ENCODE measurements at regions of chr9 and their contacts with region 1.

Region 1: DNA sequence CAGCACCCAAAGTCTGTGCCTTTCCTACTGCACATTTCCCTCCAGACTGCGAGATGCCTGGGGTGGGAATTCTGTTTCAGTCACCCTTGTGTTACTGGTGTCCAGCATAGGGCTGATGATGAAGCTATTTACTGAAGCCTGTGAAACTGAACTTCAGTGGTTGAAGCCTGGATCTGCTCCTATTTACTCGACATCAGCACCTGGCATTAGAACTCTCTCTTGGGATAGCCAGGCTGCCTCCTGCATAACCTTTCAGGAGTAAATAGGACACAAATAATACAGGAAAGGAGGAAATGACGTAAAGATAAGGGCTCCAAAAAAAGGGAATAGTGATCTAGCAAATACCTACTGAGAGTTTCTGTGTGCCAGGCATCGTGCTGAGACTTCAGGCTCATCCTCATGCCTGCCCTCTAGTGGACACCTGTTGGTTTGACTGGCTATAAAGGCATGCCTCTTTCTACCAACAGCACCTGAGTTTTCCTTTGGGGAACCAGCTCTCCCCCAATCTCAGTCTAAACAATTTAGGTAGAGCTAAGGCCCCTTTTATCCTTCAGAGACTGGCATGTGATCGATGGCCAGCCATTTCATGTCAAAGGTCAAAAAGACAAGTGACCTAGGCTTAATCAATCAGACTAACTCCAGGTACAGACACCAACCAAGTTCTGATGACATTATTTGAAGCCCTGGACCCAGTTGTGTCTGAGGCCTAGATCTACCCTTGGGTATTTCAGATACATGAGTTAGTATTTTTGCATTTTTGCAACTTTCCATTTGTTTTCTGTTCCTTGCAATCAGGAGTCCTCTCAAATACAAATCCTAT is 192.1 kb upstream of the TRIM32 start:
- DNase-seq: peak in 1 of 5 donors; percentile 27
- ATAC-seq: peak in 2 of 4 donors; percentile 27 to 45
- H3K4me3 ChIP-seq: no peak overlapping the region
- H3K27ac ChIP-seq: no peak overlapping the region
- H3K4me1 ChIP-seq: no peaks in the 10 kb centered on the region
- H3K27me3 ChIP-seq: no peaks in the 10 kb centered on the region
- CTCF ChIP-seq: peak; percentile 46 to 73 (median 61)
- POLR2A ChIP-seq: no peak

Region 2: GRCh38 chr9:116156621-116157314 is 338.3 kb before region 1 on chr9:
- intact Hi-C with region 1: loop called (anchors 5 to 10 kb)
- DNase-seq: peak; percentile 80 to 90 (median 81)
- ATAC-seq: peak; percentile 92 to 97 (median 94)
- H3K4me3 ChIP-seq: peak overlapping the region in 10 of 12 donors; percentile 11 to 75 (median 50)
- H3K27ac ChIP-seq: peak overlapping the region; percentile 65 to 97 (median 84)
- H3K4me1 ChIP-seq: peaks cover 0 to 36% (median 6%) of the 10 kb centered on the region in 12 donors
- H3K27me3 ChIP-seq: peaks cover 0 to 46% (median 4%) of the 10 kb centered on the region in 9 donors
- CTCF ChIP-seq: peak in 1 of 12 donors; percentile 1
- POLR2A ChIP-seq: peak in 1 of 2 donors; percentile 39

Region 3: DNA sequence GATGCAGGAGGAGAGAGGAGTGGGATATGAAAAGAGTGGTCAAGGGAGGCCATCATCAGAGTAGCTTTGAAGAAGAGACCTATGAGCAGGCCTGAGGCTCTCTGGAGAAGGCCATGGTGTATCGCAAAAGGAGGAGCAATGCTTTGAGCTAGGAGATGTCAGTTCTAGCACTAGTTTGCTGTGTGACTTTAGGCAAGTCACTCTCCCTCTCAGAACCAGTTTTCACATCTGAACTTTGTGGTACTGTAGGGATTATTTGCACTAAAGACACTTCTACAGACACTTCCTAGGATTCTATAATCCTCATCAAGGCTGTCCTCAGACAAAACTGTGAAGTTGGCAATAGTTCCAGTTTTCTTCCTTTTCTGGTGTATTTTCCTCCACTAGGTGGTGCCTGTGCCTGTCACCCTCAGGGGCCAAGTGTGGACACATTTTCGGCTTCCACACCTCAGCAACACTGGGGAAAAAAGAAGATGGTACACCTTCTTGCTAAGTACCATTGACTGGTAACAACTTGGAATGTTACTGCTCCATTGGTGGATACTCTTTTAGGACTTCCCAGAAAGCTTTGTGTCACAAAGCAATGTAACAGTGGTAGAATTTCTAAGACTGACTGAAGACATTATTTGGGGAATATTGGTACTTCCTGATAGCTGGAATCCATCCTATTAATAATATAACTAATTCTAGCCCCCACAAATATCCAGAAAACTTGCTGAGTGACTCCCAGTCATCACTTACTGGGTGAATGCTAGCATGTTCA is 331.6 kb before region 1 on chr9:
- intact Hi-C with region 1: loop called in 9 of 10 experiments (anchors 5 to 10 kb)
- DNase-seq: no peak
- ATAC-seq: peak in 1 of 4 donors; percentile 41
- H3K4me3 ChIP-seq: no peak overlapping the region
- H3K27ac ChIP-seq: no peak overlapping the region
- H3K4me1 ChIP-seq: peaks cover 0 to 15% (median 0%) of the 10 kb centered on the region in 12 donors
- H3K27me3 ChIP-seq: no peaks in the 10 kb centered on the region
- CTCF ChIP-seq: peak; percentile 17 to 56 (median 34)
- POLR2A ChIP-seq: no peak

Region 4: GRCh38 chr9:116365056-116365471 is 130.0 kb before region 1 on chr9:
- intact Hi-C with region 1: loop called in 1 of 10 experiments (anchors 5 kb)
- DNase-seq: peak; percentile 65 to 74 (median 68)
- ATAC-seq: peak; percentile 87 to 97 (median 96)
- H3K4me3 ChIP-seq: peak overlapping the region in 5 of 12 donors; percentile 18 to 34 (median 25)
- H3K27ac ChIP-seq: peak overlapping the region in 8 of 12 donors; percentile 39 to 76 (median 61)
- H3K4me1 ChIP-seq: peaks cover 0 to 25% (median 7%) of the 10 kb centered on the region in 12 donors
- H3K27me3 ChIP-seq: no peaks in the 10 kb centered on the region
- CTCF ChIP-seq: peak in 1 of 12 donors; percentile 30
- POLR2A ChIP-seq: no peak

Region 5: DNA sequence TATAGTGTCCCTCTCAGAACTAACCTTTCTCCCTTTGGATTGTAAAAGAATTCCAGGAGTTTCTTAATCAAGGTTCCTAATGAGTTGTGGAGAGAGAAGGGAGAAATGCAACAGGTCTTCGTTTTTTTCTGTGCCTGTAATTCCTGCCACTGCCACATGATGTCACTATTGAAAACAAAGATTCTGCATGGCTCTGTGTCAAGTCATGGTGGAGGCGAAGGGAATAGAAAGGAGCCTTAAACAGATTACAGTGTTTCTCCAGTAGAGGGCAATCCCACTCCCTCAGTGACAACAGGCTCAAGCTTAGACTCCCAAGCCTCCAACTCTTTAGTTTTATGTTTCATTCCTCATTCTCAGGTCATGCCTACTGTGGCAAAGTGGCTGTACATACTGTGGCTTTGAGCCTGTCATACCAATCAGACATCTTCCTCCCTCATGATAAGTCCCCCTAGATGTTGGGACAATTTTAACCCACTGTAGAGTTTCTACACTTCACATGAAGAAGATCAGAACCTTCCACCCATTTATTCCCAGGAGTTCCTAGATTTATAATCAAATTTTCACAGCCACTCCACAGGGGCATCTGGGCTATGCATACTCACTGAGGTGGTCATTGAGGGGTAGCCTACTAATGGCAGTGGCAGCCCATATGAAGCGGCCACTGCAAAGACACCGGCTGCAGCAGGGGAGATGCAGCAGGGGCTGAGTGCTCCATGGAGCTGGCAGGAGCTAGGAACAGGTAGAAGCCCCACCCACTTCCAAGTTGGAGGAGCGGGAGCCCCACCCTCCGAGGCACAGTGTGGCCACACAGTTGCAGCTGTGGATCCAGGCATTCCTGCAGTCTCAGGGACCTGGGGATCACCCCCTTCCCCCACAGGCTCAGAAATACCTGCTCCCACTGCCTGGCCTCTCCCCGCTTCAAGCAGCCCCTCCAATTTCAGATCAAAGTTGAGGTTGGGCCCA is 94.6 kb after region 1 on chr9:
- intact Hi-C with region 1: no loop called
- DNase-seq: no peak
- ATAC-seq: no peak
- H3K4me3 ChIP-seq: no peak overlapping the region
- H3K27ac ChIP-seq: no peak overlapping the region
- H3K4me1 ChIP-seq: peaks cover 0 to 4% (median 0%) of the 10 kb centered on the region in 12 donors
- H3K27me3 ChIP-seq: no peaks in the 10 kb centered on the region
- CTCF ChIP-seq: peak in 9 of 12 donors; percentile 14 to 36 (median 25)
- POLR2A ChIP-seq: no peak

Region 6: DNA sequence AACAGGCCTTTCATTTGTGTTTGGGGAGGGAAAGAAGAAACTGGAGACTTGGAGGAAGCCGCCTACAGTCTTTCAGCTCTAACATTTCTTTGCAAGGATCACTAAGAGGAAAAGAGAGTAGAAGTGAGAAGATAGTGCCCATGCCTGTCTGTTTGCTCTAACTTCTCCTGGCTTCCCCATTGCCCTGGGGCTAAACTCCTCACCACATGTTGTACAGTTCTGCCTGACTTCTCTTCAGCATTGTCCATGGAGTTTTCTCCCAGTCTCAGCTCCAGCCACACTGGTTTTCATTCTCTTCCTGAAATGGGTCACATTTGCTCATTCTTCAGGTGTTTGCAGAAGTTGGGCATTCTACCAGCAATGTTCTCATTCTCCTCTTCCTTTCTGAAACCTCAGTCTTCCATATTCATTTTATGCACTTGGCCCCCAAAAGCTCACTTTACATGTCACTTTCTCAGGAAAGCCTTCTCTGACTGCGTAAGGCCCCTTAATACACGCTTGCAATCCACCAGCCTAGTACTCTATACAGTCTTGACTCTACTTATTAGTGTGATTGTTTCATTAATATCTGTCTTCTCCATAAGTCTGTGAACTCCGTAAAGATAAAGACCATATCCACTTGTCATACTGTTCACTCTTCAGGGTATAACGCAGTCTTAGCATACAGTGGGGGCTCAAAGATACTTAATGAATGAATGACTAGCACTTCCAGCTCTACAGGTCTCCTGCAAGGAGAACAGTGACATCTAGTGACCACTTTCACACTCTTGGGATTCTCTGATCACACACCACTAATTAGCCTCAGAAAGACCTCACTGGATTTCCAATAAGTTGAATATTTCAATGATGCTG is 151.9 kb after region 1 on chr9:
- intact Hi-C with region 1: loop called in 5 of 10 experiments (anchors 5 to 10 kb)
- DNase-seq: no peak
- ATAC-seq: peak; percentile 62 to 87 (median 82)
- H3K4me3 ChIP-seq: no peak overlapping the region
- H3K27ac ChIP-seq: peak overlapping the region in 1 of 12 donors; percentile 66
- H3K4me1 ChIP-seq: peaks cover 0 to 39% (median 7%) of the 10 kb centered on the region in 12 donors
- H3K27me3 ChIP-seq: no peaks in the 10 kb centered on the region
- CTCF ChIP-seq: peak; percentile 35 to 69 (median 58)
- POLR2A ChIP-seq: no peak

Region 7: GRCh38 chr9:116661037-116661954 is 166.3 kb after region 1 on chr9:
- intact Hi-C with region 1: loop called in 1 of 10 experiments (anchors 5 kb)
- DNase-seq: peak in 1 of 5 donors; percentile 15
- ATAC-seq: peak; percentile 59 to 86 (median 82)
- H3K4me3 ChIP-seq: no peak overlapping the region
- H3K27ac ChIP-seq: no peak overlapping the region
- H3K4me1 ChIP-seq: peaks cover 0 to 18% (median 7%) of the 10 kb centered on the region in 12 donors
- H3K27me3 ChIP-seq: no peaks in the 10 kb centered on the region
- CTCF ChIP-seq: peak; percentile 44 to 80 (median 70)
- POLR2A ChIP-seq: no peak